ENCODE measurements at regions of chr14 and their contacts with region 1.

Region 1: DNA sequence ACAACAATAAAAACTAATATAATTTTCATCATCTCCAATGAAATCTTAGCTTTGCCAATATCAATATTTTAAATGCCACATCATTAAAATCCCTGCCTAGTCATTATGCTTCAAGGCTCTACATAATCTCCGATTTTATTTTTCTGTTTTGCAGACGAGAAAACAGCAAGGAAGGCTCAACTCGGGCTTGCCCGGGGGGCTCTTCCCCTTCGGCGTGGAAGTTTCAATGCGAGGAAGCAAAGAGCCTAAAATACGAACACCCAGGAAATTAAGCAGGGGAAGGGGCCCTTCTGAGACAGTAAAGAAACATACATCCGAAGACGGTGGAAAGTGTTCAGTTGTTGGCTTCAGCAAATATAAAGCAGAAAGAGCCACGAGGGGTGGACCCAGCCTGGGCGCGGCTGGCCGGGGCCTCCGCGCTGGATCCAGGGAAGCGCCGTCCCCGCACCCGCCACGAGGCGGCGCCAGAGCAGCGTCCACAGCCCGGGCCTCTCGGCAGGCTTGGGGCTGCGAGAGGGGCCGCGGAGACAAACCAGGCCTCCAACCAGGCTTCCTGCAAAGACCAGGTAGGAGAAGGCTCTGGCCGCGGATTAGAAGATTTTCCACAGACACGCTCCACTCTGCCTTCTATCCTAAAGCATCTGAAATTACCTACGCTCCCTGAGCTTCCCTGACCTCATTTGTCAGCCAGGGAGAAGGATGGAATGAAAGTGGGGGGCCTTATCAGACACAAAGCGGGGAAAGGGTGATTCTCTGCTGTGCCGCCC is 77.2 kb downstream of the SERPINA3 start:
- DNase-seq: peak in 2 of 3 donors; percentile 69 to 74
- ATAC-seq: peak; percentile 94
- H3K4me3 ChIP-seq: no peak overlapping the region
- H3K4me1 ChIP-seq: no peaks in the 10 kb centered on the region
- CTCF ChIP-seq: peak; percentile 84

Region 2: GRCh38 chr14:95098984-95099599 is 409.7 kb after region 1 on chr14:
- intact Hi-C with region 1: loop called in 1 of 2 experiments (anchors 10 kb)
- DNase-seq: peak in 2 of 3 donors; percentile 58 to 73
- ATAC-seq: peak; percentile 88
- H3K4me3 ChIP-seq: no peak overlapping the region
- H3K4me1 ChIP-seq: no peaks in the 10 kb centered on the region
- CTCF ChIP-seq: peak; percentile 52

Region 3: GRCh38 chr14:95431199-95432143 is 742.1 kb after region 1 on chr14:
- intact Hi-C with region 1: loop called in 1 of 2 experiments (anchors 5 kb)
- DNase-seq: peak in 1 of 3 donors; percentile 36
- ATAC-seq: peak; percentile 73
- H3K4me3 ChIP-seq: no peak overlapping the region
- H3K4me1 ChIP-seq: no peaks in the 10 kb centered on the region
- CTCF ChIP-seq: no peak